Activated CD4-positive, alpha-beta memory T cell treated with anti-CD3 and anti-CD28 coated beads, Interleukin-2, amount 10 ng/mL, durations not matched to agents 7 days and 5 days (primary cell): ENCODE measurements at regions of chr12 and their contacts with region 1.

Region 1: GRCh38 chr12:113221181-113221997 is at the start of gene TPCN1:
- DNase-seq: peak; percentile 99
- H3K4me3 Mint-ChIP-seq: peak within 1 kb of the TSS; percentile 79
- H3K27ac Mint-ChIP-seq: peak within 1 kb of the TSS; percentile 81
- H3K4me1 Mint-ChIP-seq: peaks cover 34% of the 10 kb centered on the region
- H3K27me3 Mint-ChIP-seq: no peaks in the 10 kb centered on the region
- total RNA-seq, gene TPCN1: 18.3 to 19.2 TPM

Region 2: GRCh38 chr12:113184900-113185773 is 36.3 kb before region 1 on chr12 and contains the starts of genes DDX54 and RITA1:
- CTCF ChIA-PET with region 1: no interaction called
- POLR2A ChIA-PET with region 1: interaction called, 47 read pairs
- DNase-seq: peak; percentile 91
- H3K4me3 Mint-ChIP-seq: peak within 1 kb of the TSS; percentile 86
- H3K27ac Mint-ChIP-seq: peak within 1 kb of the TSS; percentile 97
- H3K4me1 Mint-ChIP-seq: peaks cover 26% of the 10 kb centered on the region
- H3K27me3 Mint-ChIP-seq: no peaks in the 10 kb centered on the region
- total RNA-seq, gene DDX54: 55.6 to 57.6 TPM
- total RNA-seq, gene RITA1: 14.7 to 16.9 TPM

Region 3: DNA sequence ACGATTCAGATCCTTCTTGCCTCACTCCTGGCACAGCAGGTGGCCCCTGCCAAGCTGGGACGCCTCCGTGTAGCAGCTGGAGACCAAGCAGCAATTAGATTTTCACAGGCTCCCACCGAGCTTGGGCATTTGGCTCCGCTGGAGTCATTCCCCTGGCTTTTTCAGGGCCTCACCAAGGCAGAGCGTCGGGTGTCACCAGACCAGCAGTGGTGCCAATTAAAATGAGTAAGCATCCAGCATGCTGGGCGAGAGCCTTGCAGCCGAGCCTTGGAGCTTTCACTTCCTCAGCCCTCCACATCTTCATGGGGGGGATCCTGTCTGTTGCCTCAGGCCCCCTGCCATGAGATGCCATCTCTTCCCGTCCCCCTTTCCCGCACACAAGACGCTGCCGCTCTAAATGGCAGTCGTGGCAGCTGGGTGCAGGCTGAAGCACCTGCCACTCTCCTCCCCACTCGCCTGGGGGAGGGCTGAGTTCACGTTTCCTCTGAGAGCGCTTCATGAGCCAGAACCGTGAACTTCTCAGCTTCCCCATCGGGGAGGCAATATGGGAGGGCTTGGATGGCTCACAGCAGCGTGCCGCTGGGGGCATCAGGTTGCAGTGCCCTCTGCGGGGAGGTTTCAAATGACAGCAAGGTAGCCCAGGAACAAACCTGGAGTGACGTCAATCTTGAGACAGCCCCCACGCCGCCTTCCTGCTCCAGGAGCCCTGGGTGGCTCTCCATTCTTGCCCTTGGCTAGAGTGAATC is 11.6 kb after region 1 on chr12:
- CTCF ChIA-PET with region 1: interaction called, 4 read pairs
- POLR2A ChIA-PET with region 1: interaction called, 30 read pairs
- DNase-seq: peak; percentile 54
- H3K4me3 Mint-ChIP-seq: peak overlapping the region; percentile 45
- H3K27ac Mint-ChIP-seq: peak overlapping the region; percentile 42
- H3K4me1 Mint-ChIP-seq: peaks cover 42% of the 10 kb centered on the region
- H3K27me3 Mint-ChIP-seq: no peaks in the 10 kb centered on the region

Region 4: GRCh38 chr12:113261847-113262470 is 40.6 kb after region 1 on chr12:
- CTCF ChIA-PET with region 1: interaction called, 3 read pairs
- POLR2A ChIA-PET with region 1: interaction called, 10 read pairs
- DNase-seq: peak; percentile 47
- H3K4me3 Mint-ChIP-seq: peak overlapping the region; percentile 14
- H3K27ac Mint-ChIP-seq: peak overlapping the region; percentile 62
- H3K4me1 Mint-ChIP-seq: peaks cover 36% of the 10 kb centered on the region
- H3K27me3 Mint-ChIP-seq: no peaks in the 10 kb centered on the region

Region 5: GRCh38 chr12:113422030-113422885 is 200.9 kb after region 1 on chr12 and contains the start of gene SDSL:
- CTCF ChIA-PET with region 1: no interaction called
- POLR2A ChIA-PET with region 1: no interaction called
- DNase-seq: peak; percentile 41
- H3K4me3 Mint-ChIP-seq: peak within 1 kb of the TSS; percentile 41
- H3K27ac Mint-ChIP-seq: no peak within 1 kb of the TSS
- H3K4me1 Mint-ChIP-seq: peaks cover 10% of the 10 kb centered on the region
- H3K27me3 Mint-ChIP-seq: peaks cover 5% of the 10 kb centered on the region
- total RNA-seq, gene SDSL: not detected